PC-9 (cell line): ENCODE measurements at regions of chr3 and their contacts with region 1.

Region 1: DNA sequence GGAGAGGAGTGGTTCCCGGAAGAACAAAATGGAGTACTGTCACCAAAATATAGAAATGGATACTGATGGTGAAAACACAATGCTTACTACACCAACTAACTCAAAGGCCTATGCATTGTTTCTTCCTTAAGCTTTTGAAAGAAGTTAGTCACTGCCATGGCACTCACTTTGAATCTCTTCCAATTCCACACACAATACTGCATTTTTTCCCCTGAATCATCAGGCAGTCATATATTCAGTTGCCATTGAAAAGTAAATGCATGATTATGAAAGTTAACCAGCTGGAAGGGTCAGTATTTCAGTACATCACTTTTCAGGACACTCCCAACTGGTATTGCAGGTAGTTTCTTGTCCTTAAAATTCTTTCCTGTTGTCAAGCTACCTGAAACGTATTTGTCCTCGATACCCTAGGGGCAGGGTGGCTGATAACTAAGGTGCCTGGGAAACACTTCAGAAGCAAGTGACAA is 9.0 kb upstream of the LRRFIP2 start:
- DNase-seq: peak; percentile 67 to 99
- H3K4me3 ChIP-seq: no peak overlapping the region; the same call in 1 of the 2 replicates
- H3K27ac ChIP-seq: peak overlapping the region; percentile 75
- H3K4me1 ChIP-seq: peaks cover 44% of the 10 kb centered on the region
- H3K27me3 ChIP-seq: no peaks in the 10 kb centered on the region
- CTCF ChIP-seq: no peak

Region 2: DNA sequence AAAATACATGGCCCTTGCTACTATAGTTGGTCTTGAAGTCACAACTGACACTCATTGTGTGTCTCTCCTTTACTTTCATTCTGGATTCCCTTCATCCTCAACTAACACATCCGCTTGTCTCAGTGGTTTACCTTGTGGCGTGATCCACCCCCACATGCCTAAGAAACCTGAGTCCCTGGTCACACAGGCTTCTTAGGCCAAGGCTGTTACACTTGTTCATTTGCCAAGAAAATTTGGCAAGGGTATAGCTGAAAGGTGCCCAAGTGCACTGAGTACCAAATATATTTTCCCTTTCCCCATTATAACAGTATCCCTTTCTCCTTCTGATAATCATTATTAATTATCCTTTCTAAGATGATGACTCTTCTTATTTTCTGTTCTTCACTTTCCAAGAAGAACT is 1010.7 kb before region 1 on chr3:
- CTCF ChIA-PET with region 1: no interaction called
- POLR2A ChIA-PET with region 1: no interaction called
- intact Hi-C with region 1: no loop called
- DNase-seq: no peak
- H3K4me3 ChIP-seq: no peak overlapping the region
- H3K27ac ChIP-seq: no peak overlapping the region
- H3K4me1 ChIP-seq: no peaks in the 10 kb centered on the region
- H3K27me3 ChIP-seq: no peaks in the 10 kb centered on the region
- CTCF ChIP-seq: no peak

Region 3: GRCh38 chr3:36993326-36994283 is 189.8 kb before region 1 on chr3 and contains the start of gene MLH1:
- CTCF ChIA-PET with region 1: no interaction called
- POLR2A ChIA-PET with region 1: no interaction called
- intact Hi-C with region 1: loop called (anchors 1 kb)
- DNase-seq: peak in 1 of 2 experiments; percentile 99
- H3K4me3 ChIP-seq: peak within 1 kb of the TSS; percentile 83
- H3K27ac ChIP-seq: peak within 1 kb of the TSS; percentile 79
- H3K4me1 ChIP-seq: peaks cover 28% of the 10 kb centered on the region
- H3K27me3 ChIP-seq: no peaks in the 10 kb centered on the region
- CTCF ChIP-seq: no peak
- total RNA-seq, gene MLH1: 30.9 and 35.2 TPM in 2 replicates

Region 4: GRCh38 chr3:37210230-37210629 is 26.8 kb after region 1 on chr3:
- CTCF ChIA-PET with region 1: interaction called, 11 read pairs
- POLR2A ChIA-PET with region 1: no interaction called
- intact Hi-C with region 1: no loop called
- DNase-seq: no peak
- H3K4me3 ChIP-seq: no peak overlapping the region
- H3K27ac ChIP-seq: no peak overlapping the region
- H3K4me1 ChIP-seq: no peaks in the 10 kb centered on the region
- H3K27me3 ChIP-seq: no peaks in the 10 kb centered on the region
- CTCF ChIP-seq: no peak

Region 5: DNA sequence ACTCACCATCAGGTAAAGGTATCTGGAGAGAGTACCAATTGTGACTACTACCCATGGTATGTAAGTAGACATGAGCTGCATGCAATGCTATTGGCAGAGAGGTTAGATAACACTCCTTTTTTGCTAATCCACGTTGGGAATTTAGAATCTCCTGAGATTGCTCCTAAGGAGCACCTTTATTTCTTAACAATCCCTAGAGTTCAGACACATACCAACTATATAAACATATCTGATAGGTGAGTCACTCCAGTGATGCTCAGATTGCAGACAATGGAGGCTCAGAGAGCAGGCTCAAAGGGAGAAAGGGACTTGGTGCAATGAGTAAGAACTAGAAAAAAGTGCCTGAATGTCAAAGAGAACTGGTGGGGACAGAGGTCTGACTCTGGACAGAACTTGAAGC is 38.0 kb after region 1 on chr3:
- CTCF ChIA-PET with region 1: no interaction called
- POLR2A ChIA-PET with region 1: interaction called, 6 read pairs
- intact Hi-C with region 1: loop called (anchors 1 kb)
- DNase-seq: peak; percentile 61 to 99
- H3K4me3 ChIP-seq: no peak overlapping the region
- H3K27ac ChIP-seq: peak overlapping the region; percentile 38
- H3K4me1 ChIP-seq: peaks cover 41% of the 10 kb centered on the region
- H3K27me3 ChIP-seq: no peaks in the 10 kb centered on the region
- CTCF ChIP-seq: no peak

Region 6: GRCh38 chr3:37243820-37244748 is 60.7 kb after region 1 on chr3:
- CTCF ChIA-PET with region 1: no interaction called
- POLR2A ChIA-PET with region 1: no interaction called
- intact Hi-C with region 1: loop called (anchors 2 kb)
- DNase-seq: peak; percentile 77 to 84
- H3K4me3 ChIP-seq: peak overlapping the region; percentile 80
- H3K27ac ChIP-seq: peak overlapping the region; percentile 80
- H3K4me1 ChIP-seq: peaks cover 37% of the 10 kb centered on the region
- H3K27me3 ChIP-seq: no peaks in the 10 kb centered on the region
- CTCF ChIP-seq: no peak

Region 7: GRCh38 chr3:37833302-37834186 is 650.1 kb after region 1 on chr3:
- CTCF ChIA-PET with region 1: no interaction called
- POLR2A ChIA-PET with region 1: interaction called, 10 read pairs
- intact Hi-C with region 1: no loop called
- DNase-seq: no peak
- H3K4me3 ChIP-seq: no peak overlapping the region
- H3K27ac ChIP-seq: no peak overlapping the region
- H3K4me1 ChIP-seq: no peaks in the 10 kb centered on the region
- H3K27me3 ChIP-seq: no peaks in the 10 kb centered on the region
- CTCF ChIP-seq: peak; percentile 34